ENCODE measurements at regions of chr16 and their contacts with region 1.

Region 1: GRCh38 chr16:80540516-80541272 is at the start of gene DYNLRB2:
- DNase-seq: peak; percentile 92
- H3K4me3 ChIP-seq: peak within 1 kb of the TSS; percentile 57 to 87 (median 59)
- H3K27ac ChIP-seq: peak within 1 kb of the TSS; percentile 75
- H3K4me1 ChIP-seq: peaks cover 11% of the 10 kb centered on the region
- H3K27me3 ChIP-seq: no peaks in the 10 kb centered on the region
- CTCF ChIP-seq: no peak
- total RNA-seq, gene DYNLRB2: 0.33 TPM in 1 of 2 donors, not detected in the other

Region 2: GRCh38 chr16:80569440-80570105 is 28.9 kb after region 1 on chr16:
- CTCF ChIA-PET with region 1: no interaction called
- dilution Hi-C with region 1: no loop called
- in situ Hi-C with region 1: no loop called
- intact Hi-C with region 1: no loop called
- DNase-seq: peak; percentile 34
- H3K4me3 ChIP-seq: no peak overlapping the region
- H3K27ac ChIP-seq: no peak overlapping the region
- H3K4me1 ChIP-seq: no peaks in the 10 kb centered on the region
- H3K27me3 ChIP-seq: no peaks in the 10 kb centered on the region
- CTCF ChIP-seq: no peak

Region 3: GRCh38 chr16:80824718-80825364 is 284.1 kb after region 1 on chr16:
- CTCF ChIA-PET with region 1: no interaction called
- dilution Hi-C with region 1: no loop called
- in situ Hi-C with region 1: loop called in 1 of 2 experiments (anchors 25 kb)
- intact Hi-C with region 1: no loop called
- DNase-seq: peak; percentile 24
- H3K4me3 ChIP-seq: no peak overlapping the region
- H3K27ac ChIP-seq: no peak overlapping the region
- H3K4me1 ChIP-seq: no peaks in the 10 kb centered on the region
- H3K27me3 ChIP-seq: no peaks in the 10 kb centered on the region
- CTCF ChIP-seq: peak; percentile 69 to 75

Region 4: GRCh38 chr16:80931801-80932712 is 391.4 kb after region 1 on chr16:
- CTCF ChIA-PET with region 1: no interaction called
- dilution Hi-C with region 1: no loop called
- in situ Hi-C with region 1: no loop called
- intact Hi-C with region 1: loop called (anchors 5 kb)
- DNase-seq: peak; percentile 12
- H3K4me3 ChIP-seq: peak overlapping the region in 2 of 3 experiments; percentile 23 to 32
- H3K27ac ChIP-seq: no peak overlapping the region
- H3K4me1 ChIP-seq: peaks cover 10% of the 10 kb centered on the region
- H3K27me3 ChIP-seq: no peaks in the 10 kb centered on the region
- CTCF ChIP-seq: no peak

Region 5: DNA sequence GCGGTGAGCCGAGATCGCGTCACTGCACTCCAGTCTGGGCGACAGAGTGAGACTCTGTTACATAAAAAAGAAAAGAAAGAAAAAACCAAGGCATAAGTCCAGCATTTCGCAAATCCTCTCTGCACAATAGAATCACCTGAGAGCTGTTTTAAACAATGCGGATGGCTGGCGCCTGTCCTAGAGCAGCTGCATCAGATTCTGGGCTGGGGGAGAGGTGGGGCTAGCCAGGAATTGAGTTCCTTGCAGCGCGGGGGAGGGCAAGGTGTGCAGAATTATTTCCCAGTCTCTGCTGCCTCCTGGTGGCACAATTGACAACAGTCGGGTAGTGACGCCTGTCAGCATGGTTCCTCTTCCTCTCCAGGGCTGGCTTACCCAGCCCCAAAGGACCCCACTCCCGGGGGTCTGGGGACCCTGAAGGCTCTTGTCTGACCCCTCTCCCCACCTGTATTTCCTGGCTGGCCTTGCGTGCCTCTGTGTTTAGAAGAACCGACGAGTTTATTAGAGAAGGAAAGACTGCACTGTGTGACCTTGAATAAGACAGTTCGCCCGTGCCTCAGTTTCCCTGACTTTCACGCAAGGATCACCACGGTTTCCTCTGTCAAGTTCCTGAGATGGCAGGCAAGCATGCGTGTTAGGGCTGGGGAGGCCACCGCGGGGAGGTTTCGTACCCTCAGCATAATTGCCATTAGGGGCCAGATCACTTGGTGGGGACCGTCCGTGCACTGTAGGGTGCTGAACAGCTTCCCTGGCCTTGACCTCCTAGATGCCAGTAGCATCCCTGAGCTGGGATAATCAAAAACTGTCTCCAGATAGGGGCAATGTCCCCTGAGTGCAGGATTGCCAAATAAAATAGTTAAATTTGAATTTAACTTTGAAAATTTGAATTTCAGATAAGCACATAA is 1197.4 kb after region 1 on chr16:
- CTCF ChIA-PET with region 1: no interaction called
- dilution Hi-C with region 1: no loop called
- in situ Hi-C with region 1: loop called in 1 of 2 experiments (anchors 25 kb)
- intact Hi-C with region 1: no loop called
- DNase-seq: peak; percentile 88
- H3K4me3 ChIP-seq: peak overlapping the region in 1 of 3 experiments; percentile 18
- H3K27ac ChIP-seq: no peak overlapping the region
- H3K4me1 ChIP-seq: peaks cover 3% of the 10 kb centered on the region
- H3K27me3 ChIP-seq: no peaks in the 10 kb centered on the region
- CTCF ChIP-seq: peak; percentile 81 to 83

Measured in mammary epithelial cell (primary cell).